ENCODE measurements at regions of chr17 and their contacts with region 1.

Region 1: GRCh38 chr17:68184816-68185436 is 62.9 kb upstream of the AMZ2 start:
- DNase-seq: peak; percentile 79
- ATAC-seq: peak; percentile 81
- H3K4me3 Mint-ChIP-seq: peak overlapping the region; percentile 53
- H3K27ac Mint-ChIP-seq: peak overlapping the region; percentile 83
- H3K4me1 Mint-ChIP-seq: peaks cover 61% of the 10 kb centered on the region
- H3K27me3 Mint-ChIP-seq: no peaks in the 10 kb centered on the region
- CTCF ChIP-seq: no peak

Region 2: GRCh38 chr17:68172461-68172954 is 12.4 kb before region 1 on chr17:
- CTCF ChIA-PET with region 1: interaction called, 60 read pairs
- POLR2A ChIA-PET with region 1: interaction called, 3 read pairs
- intact Hi-C with region 1: no loop called
- DNase-seq: peak; percentile 84
- ATAC-seq: peak; percentile 82
- H3K4me3 Mint-ChIP-seq: no peak overlapping the region
- H3K27ac Mint-ChIP-seq: no peak overlapping the region
- H3K4me1 Mint-ChIP-seq: peaks cover 20% of the 10 kb centered on the region
- H3K27me3 Mint-ChIP-seq: peaks cover 3% of the 10 kb centered on the region
- CTCF ChIP-seq: peak; percentile 99